Mammary epithelial cell (primary cell): ENCODE measurements at regions of chr11 and their contacts with region 1.

Region 1: GRCh38 chr11:102139081-102139498 is 28.8 kb downstream of the YAP1 start:
- DNase-seq: peak; percentile 82
- H3K4me3 ChIP-seq: peak overlapping the region in 1 of 3 experiments; percentile 14
- H3K27ac ChIP-seq: peak overlapping the region; percentile 93
- H3K4me1 ChIP-seq: peaks cover 23% of the 10 kb centered on the region
- H3K27me3 ChIP-seq: no peaks in the 10 kb centered on the region
- CTCF ChIP-seq: no peak

Region 2: GRCh38 chr11:102177974-102178631 is 39.0 kb after region 1 on chr11:
- CTCF ChIA-PET with region 1: no interaction called
- dilution Hi-C with region 1: no loop called
- in situ Hi-C with region 1: no loop called
- intact Hi-C with region 1: loop called (anchors 5 kb)
- DNase-seq: peak; percentile 96
- H3K4me3 ChIP-seq: no peak overlapping the region
- H3K27ac ChIP-seq: peak overlapping the region; percentile 66
- H3K4me1 ChIP-seq: peaks cover 28% of the 10 kb centered on the region
- H3K27me3 ChIP-seq: no peaks in the 10 kb centered on the region
- CTCF ChIP-seq: no peak

Region 3: GRCh38 chr11:102237096-102237735 is 98.1 kb after region 1 on chr11:
- CTCF ChIA-PET with region 1: no interaction called
- dilution Hi-C with region 1: no loop called
- in situ Hi-C with region 1: no loop called
- intact Hi-C with region 1: no loop called
- DNase-seq: peak; percentile 72
- H3K4me3 ChIP-seq: no peak overlapping the region
- H3K27ac ChIP-seq: no peak overlapping the region
- H3K4me1 ChIP-seq: peaks cover 13% of the 10 kb centered on the region
- H3K27me3 ChIP-seq: no peaks in the 10 kb centered on the region
- CTCF ChIP-seq: no peak